ENCODE measurements at regions of chr1 and their contacts with region 1.

Region 1: GRCh38 chr1:109483672-109484518 is at the start of gene ATXN7L2:
- DNase-seq: peak; percentile 86 to 98 (median 92)
- ATAC-seq: peak; percentile 83
- H3K4me3 ChIP-seq: peak within 1 kb of the TSS; percentile 76
- H3K4me3 Mint-ChIP-seq: peak within 1 kb of the TSS; percentile 93
- H3K27ac ChIP-seq: peak within 1 kb of the TSS; percentile 74 to 78
- H3K27ac Mint-ChIP-seq: peak within 1 kb of the TSS; percentile 87
- H3K4me1 ChIP-seq: peaks cover 23% of the 10 kb centered on the region
- H3K4me1 Mint-ChIP-seq: peaks cover 39% of the 10 kb centered on the region
- H3K27me3 ChIP-seq: no peaks in the 10 kb centered on the region
- H3K27me3 Mint-ChIP-seq: peaks cover 1% of the 10 kb centered on the region
- CTCF ChIP-seq: no peak
- total RNA-seq, gene ATXN7L2: 11.8 to 13.1 TPM

Region 2: GRCh38 chr1:109213785-109214468 is 270.0 kb before region 1 on chr1 and contains the start of gene SARS1:
- CTCF ChIA-PET with region 1: no interaction called
- POLR2A ChIA-PET with region 1: interaction called, 10 read pairs
- intact Hi-C with region 1: no loop called
- DNase-seq: peak; percentile 75 to 95 (median 88)
- ATAC-seq: peak; percentile 82
- H3K4me3 ChIP-seq: peak within 1 kb of the TSS; percentile 81
- H3K4me3 Mint-ChIP-seq: peak within 1 kb of the TSS; percentile 99
- H3K27ac ChIP-seq: peak within 1 kb of the TSS; percentile 73 to 74
- H3K27ac Mint-ChIP-seq: peak within 1 kb of the TSS; percentile 90
- H3K4me1 ChIP-seq: peaks cover 33% of the 10 kb centered on the region
- H3K4me1 Mint-ChIP-seq: peaks cover 41% of the 10 kb centered on the region
- H3K27me3 ChIP-seq: no peaks in the 10 kb centered on the region
- H3K27me3 Mint-ChIP-seq: no peaks in the 10 kb centered on the region
- CTCF ChIP-seq: no peak
- total RNA-seq, gene SARS1: 122 to 131 TPM

Region 3: GRCh38 chr1:109426278-109427170 is 57.4 kb before region 1 on chr1 and contains the start of gene PSMA5:
- CTCF ChIA-PET with region 1: interaction called, 4 read pairs
- POLR2A ChIA-PET with region 1: interaction called, 76 read pairs
- intact Hi-C with region 1: loop called (anchors 1 to 2 kb)
- DNase-seq: peak; percentile 87 to 99 (median 92)
- ATAC-seq: peak; percentile 91
- H3K4me3 ChIP-seq: peak within 1 kb of the TSS; percentile 98
- H3K4me3 Mint-ChIP-seq: peak within 1 kb of the TSS; percentile 98
- H3K27ac ChIP-seq: peak within 1 kb of the TSS; percentile 91 to 95
- H3K27ac Mint-ChIP-seq: peak within 1 kb of the TSS; percentile 98
- H3K4me1 ChIP-seq: peaks cover 33% of the 10 kb centered on the region
- H3K4me1 Mint-ChIP-seq: peaks cover 52% of the 10 kb centered on the region
- H3K27me3 ChIP-seq: no peaks in the 10 kb centered on the region
- H3K27me3 Mint-ChIP-seq: no peaks in the 10 kb centered on the region
- CTCF ChIP-seq: no peak
- total RNA-seq, gene PSMA5: 29.8 to 33.8 TPM

Region 4: DNA sequence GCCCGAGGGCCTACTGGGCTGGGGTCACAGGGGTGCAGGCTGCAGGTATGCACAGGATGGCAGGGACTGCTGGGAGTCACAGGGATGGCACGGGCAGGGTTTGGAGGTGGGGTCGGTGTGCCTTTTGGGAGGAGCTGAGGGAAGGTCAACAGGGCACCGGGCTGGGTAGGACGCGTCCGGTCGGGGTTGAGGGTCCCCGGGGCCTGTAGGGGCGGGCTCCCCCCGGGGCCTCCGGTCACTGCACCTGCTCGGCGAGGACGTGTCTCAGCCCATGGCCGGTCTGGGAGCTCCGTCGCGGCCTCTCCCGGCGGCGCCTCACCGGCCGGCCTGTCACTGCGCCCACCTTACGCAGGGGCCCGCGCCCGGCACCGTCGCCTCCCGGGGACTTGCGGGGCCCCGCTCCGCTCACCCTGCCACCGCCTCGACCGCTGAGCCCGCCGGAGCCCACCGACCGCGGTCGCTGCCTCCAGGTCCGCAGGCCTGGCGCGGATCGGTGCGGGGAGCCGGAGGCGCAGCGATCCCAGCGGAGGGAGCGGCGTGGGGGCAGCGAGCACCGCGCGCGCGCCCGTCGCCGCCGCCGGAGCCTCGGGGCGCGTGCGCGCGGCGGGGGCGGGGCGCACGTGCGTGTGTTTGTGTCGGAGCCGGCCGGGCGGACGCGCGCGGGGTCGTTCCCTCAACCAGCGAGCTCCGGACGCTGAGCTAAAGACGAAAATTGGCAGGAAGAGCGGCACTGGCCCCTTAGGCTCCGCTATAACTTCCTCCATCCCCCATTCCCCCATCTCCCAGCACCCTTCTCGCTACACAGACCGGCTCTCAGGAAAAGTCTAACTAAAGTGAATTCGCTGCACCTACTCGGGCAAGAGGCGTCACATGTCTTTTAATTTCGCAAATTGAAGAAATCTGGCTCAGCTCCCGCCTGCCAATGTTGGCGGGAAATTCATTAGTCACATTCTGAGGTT is 25.6 kb after region 1 on chr1 and contains the start of gene AMIGO1:
- CTCF ChIA-PET with region 1: no interaction called
- POLR2A ChIA-PET with region 1: interaction called, 15 read pairs
- intact Hi-C with region 1: no loop called
- DNase-seq: peak; percentile 32 to 88 (median 64)
- ATAC-seq: peak; percentile 74
- H3K4me3 ChIP-seq: peak within 1 kb of the TSS; percentile 77
- H3K4me3 Mint-ChIP-seq: peak within 1 kb of the TSS; percentile 98
- H3K27ac ChIP-seq: peak within 1 kb of the TSS; percentile 40 to 54
- H3K27ac Mint-ChIP-seq: peak within 1 kb of the TSS; percentile 96
- H3K4me1 ChIP-seq: peaks cover 57% of the 10 kb centered on the region
- H3K4me1 Mint-ChIP-seq: peaks cover 71% of the 10 kb centered on the region
- H3K27me3 ChIP-seq: no peaks in the 10 kb centered on the region
- H3K27me3 Mint-ChIP-seq: no peaks in the 10 kb centered on the region
- CTCF ChIP-seq: no peak
- total RNA-seq, gene AMIGO1: 16.9 TPM

Region 5: GRCh38 chr1:109739738-109740660 is 256.1 kb after region 1 on chr1:
- CTCF ChIA-PET with region 1: no interaction called
- POLR2A ChIA-PET with region 1: no interaction called
- intact Hi-C with region 1: loop called in 1 of 2 experiments (anchors 5 kb)
- DNase-seq: peak; percentile 73 to 94 (median 82)
- ATAC-seq: peak; percentile 94
- H3K4me3 ChIP-seq: peak overlapping the region; percentile 71
- H3K4me3 Mint-ChIP-seq: peak overlapping the region; percentile 90
- H3K27ac ChIP-seq: peak overlapping the region in 1 of 2 donors; percentile 14
- H3K27ac Mint-ChIP-seq: peak overlapping the region; percentile 80
- H3K4me1 ChIP-seq: peaks cover 18% of the 10 kb centered on the region
- H3K4me1 Mint-ChIP-seq: peaks cover 15% of the 10 kb centered on the region
- H3K27me3 ChIP-seq: peaks cover 0 to 4% of the 10 kb centered on the region in 2 experiments
- H3K27me3 Mint-ChIP-seq: no peaks in the 10 kb centered on the region
- CTCF ChIP-seq: no peak

Measured in CD4-positive, alpha-beta T cell (primary cell).